ENCODE measurements at regions of chr15 and their contacts with region 1.

Region 1: GRCh38 chr15:85742186-85742821 is 52.4 kb downstream of the KLHL25 start:
- DNase-seq: no peak
- ATAC-seq: peak; percentile 16

Region 2: GRCh38 chr15:85831415-85832113 is 89.3 kb after region 1 on chr15:
- intact Hi-C with region 1: loop called in 1 of 2 experiments (anchors 10 kb)
- DNase-seq: peak; percentile 59 to 81
- ATAC-seq: peak; percentile 86

Measured in left colon (tissue), 2 donors.